ENCODE measurements at regions of chr3 and their contacts with region 1.

Region 1: DNA sequence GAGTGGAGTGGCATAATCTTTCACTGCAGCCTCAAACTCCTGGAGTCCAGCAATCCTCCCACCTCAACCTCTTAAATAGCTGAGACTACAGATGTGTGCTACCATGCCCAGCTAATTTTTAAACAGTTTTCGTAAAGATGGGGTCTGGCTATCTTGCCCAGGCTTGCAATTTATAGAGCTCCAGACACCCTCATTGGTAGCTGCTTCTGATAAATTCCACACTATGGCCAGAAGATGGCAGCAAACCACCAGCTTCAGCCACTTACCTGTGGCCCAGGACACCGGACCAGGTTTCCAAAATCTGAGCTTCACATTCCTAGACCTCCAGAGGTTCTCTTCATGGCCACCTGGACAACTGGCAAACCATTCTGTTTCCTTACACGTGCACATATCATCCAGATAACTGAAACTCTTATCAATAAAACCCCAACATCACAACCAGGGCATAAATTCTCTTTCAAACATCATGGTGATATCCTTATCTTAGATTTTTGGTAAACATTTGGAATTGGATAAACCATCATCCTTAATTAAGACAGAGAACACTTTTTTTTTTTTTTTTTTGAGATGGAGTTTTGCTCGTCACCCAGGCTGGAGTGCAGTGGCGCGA is 28.9 kb downstream of the FBXW12 start:
- DNase-seq: peak; percentile 90
- H3K4me3 Mint-ChIP-seq: peak overlapping the region; percentile 46
- H3K27ac Mint-ChIP-seq: peak overlapping the region; percentile 95
- H3K4me1 Mint-ChIP-seq: peaks cover 34% of the 10 kb centered on the region
- H3K27me3 Mint-ChIP-seq: no peaks in the 10 kb centered on the region
- CTCF ChIP-seq: peak; percentile 96

Region 2: GRCh38 chr3:48194446-48195071 is 206.4 kb before region 1 on chr3:
- CTCF ChIA-PET with region 1: interaction called, 6 read pairs
- POLR2A ChIA-PET with region 1: interaction called, 11 read pairs
- intact Hi-C with region 1: no loop called
- DNase-seq: peak; percentile 87
- H3K4me3 Mint-ChIP-seq: no peak overlapping the region
- H3K27ac Mint-ChIP-seq: no peak overlapping the region
- H3K4me1 Mint-ChIP-seq: no peaks in the 10 kb centered on the region
- H3K27me3 Mint-ChIP-seq: no peaks in the 10 kb centered on the region
- CTCF ChIP-seq: peak; percentile 94

Region 3: DNA sequence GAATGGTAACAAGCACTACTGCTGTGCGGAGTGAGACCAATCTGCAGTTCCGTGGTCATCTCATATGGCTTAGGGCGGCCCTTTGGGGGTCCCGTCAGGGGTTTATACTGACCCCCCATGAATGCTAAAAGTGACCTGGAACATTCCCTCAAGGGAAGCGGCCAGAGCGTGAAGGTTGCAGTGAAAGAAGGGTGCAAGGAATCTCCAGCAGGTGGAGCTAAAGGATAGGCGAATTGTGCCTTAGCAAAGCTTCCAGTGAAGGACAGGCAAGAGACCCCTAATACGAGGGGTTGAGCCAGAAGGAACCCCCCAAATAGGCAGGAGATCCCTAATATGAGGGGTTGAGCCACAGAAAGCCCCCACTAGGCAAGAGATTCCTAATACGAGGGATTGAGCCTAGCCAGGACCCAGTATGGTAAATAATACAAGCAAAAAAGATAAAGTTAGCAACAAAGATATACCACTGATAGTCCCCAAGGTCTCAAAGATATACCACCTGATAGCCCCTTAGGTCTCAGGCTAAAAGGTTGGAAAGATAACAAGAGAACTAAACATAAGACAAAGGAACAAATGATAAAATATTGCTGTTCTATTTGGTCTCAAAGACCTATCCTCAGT is 127.2 kb before region 1 on chr3:
- CTCF ChIA-PET with region 1: interaction called, 20 read pairs
- POLR2A ChIA-PET with region 1: interaction called, 9 read pairs
- intact Hi-C with region 1: loop called (anchors 2 kb)
- DNase-seq: peak; percentile 74
- H3K4me3 Mint-ChIP-seq: no peak overlapping the region
- H3K27ac Mint-ChIP-seq: no peak overlapping the region
- H3K4me1 Mint-ChIP-seq: peaks cover 17% of the 10 kb centered on the region
- H3K27me3 Mint-ChIP-seq: no peaks in the 10 kb centered on the region
- CTCF ChIP-seq: peak; percentile 85

Region 4: GRCh38 chr3:48301020-48301796 is 99.7 kb before region 1 on chr3:
- CTCF ChIA-PET with region 1: interaction called, 5 read pairs
- POLR2A ChIA-PET with region 1: interaction called, 10 read pairs
- intact Hi-C with region 1: no loop called
- DNase-seq: peak; percentile 92
- H3K4me3 Mint-ChIP-seq: peak within 1 kb of the TSS; percentile 97
- H3K27ac Mint-ChIP-seq: peak within 1 kb of the TSS; percentile 99
- H3K4me1 Mint-ChIP-seq: peaks cover 24% of the 10 kb centered on the region
- H3K27me3 Mint-ChIP-seq: no peaks in the 10 kb centered on the region
- CTCF ChIP-seq: no peak

Region 5: GRCh38 chr3:48415554-48415953 is 14.6 kb after region 1 on chr3:
- CTCF ChIA-PET with region 1: interaction called, 30 read pairs
- POLR2A ChIA-PET with region 1: interaction called, 749 read pairs
- intact Hi-C with region 1: no loop called
- DNase-seq: no peak
- H3K4me3 Mint-ChIP-seq: no peak overlapping the region
- H3K27ac Mint-ChIP-seq: no peak overlapping the region
- H3K4me1 Mint-ChIP-seq: peaks cover 15% of the 10 kb centered on the region
- H3K27me3 Mint-ChIP-seq: no peaks in the 10 kb centered on the region
- CTCF ChIP-seq: no peak

Region 6: DNA sequence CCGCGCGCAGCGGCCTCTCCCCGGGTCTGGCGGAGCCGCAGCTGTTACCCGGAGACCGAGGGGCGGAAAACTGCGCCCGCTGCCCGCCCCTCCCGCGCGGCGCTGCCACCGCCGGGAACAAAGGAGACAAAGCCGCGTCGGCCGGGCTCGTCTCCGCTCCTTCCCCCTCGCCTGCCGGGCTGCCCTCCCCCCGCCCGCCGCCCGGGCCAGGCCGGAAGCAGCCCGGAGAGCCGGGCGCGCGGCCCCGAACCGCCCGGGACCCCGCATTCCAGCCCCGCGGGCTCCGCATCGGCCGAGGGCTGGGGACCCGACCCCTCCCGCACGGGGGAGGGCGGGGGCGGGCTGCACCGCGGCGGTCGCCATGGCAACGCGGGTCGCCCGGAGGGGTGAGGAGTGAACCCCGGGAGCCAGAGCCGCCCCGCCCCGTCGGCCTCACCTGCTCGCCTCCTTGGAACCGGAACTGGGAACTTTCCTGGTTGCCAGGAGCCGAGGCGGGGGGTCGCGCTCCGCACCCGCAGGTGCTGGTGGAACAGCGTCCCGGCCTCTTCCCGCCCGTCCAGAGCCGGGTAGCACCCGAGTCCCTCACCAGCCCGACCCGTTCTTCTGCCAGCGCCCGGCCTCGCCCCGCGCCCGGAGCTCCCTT is 28.5 kb after region 1 on chr3:
- CTCF ChIA-PET with region 1: interaction called, 647 read pairs
- POLR2A ChIA-PET with region 1: interaction called, 749 read pairs
- intact Hi-C with region 1: no loop called
- DNase-seq: peak; percentile 69
- H3K4me3 Mint-ChIP-seq: peak overlapping the region; percentile 99
- H3K27ac Mint-ChIP-seq: peak overlapping the region; percentile 98
- H3K4me1 Mint-ChIP-seq: peaks cover 71% of the 10 kb centered on the region
- H3K27me3 Mint-ChIP-seq: no peaks in the 10 kb centered on the region
- CTCF ChIP-seq: no peak

Region 7: DNA sequence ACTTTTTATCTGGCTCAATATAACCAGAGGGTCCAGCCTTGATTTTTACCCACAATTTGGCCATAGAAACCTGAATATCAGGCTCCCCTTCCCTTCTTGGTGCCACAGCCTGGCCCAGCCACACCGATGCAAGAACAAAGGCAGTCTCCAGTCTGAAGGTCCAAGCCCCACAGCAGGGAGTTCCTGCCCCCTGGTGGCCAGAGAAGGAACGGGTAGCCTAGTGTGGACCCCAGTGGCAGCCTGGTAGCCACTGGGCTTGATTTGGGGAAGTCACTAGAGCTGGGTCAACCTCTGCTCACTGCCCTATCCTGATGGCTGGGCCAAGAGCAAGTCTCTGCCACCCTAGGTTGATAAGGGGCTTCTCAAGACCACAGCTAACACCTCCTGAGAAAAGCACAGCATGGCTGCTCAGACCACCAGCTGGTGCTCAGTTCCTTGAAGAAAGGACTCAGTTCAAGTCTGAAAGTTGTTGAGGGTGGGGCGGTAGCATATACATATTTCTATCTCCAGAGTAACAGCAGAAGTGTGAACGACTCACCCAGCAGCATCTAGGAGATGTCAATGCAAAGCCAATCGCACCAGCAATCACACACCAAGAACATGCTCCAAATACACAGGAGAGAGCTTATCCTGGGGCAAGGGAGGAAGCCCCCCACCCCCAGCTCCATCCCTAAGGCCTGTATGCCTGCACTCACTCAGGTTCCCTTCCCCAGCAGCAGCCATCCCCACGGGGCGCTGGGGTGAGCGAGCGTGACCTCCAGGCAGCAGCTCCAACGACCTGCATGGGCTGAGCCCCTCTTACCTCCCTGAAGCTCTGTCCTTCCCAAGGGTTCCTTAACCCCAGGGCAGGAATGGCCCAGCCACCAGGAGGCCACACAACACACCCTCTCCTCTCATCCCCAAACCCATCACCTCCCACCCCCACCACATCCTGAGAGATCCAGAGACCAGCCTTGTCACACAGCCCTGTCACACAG is 148.1 kb after region 1 on chr3:
- CTCF ChIA-PET with region 1: interaction called, 36 read pairs
- POLR2A ChIA-PET with region 1: no interaction called
- intact Hi-C with region 1: no loop called
- DNase-seq: peak; percentile 80
- H3K4me3 Mint-ChIP-seq: no peak overlapping the region
- H3K27ac Mint-ChIP-seq: no peak overlapping the region
- H3K4me1 Mint-ChIP-seq: no peaks in the 10 kb centered on the region
- H3K27me3 Mint-ChIP-seq: no peaks in the 10 kb centered on the region
- CTCF ChIP-seq: peak; percentile 97

Region 8: GRCh38 chr3:48966876-48967361 is 566.0 kb after region 1 on chr3:
- CTCF ChIA-PET with region 1: no interaction called
- POLR2A ChIA-PET with region 1: no interaction called
- intact Hi-C with region 1: no loop called
- DNase-seq: no peak
- H3K4me3 Mint-ChIP-seq: no peak overlapping the region
- H3K27ac Mint-ChIP-seq: no peak overlapping the region
- H3K4me1 Mint-ChIP-seq: peaks cover 5% of the 10 kb centered on the region
- H3K27me3 Mint-ChIP-seq: no peaks in the 10 kb centered on the region
- CTCF ChIP-seq: no peak

Measured in MCF 10A (cell line).